ENCODE measurements at regions of chr7 and their contacts with region 1.

Region 1: DNA sequence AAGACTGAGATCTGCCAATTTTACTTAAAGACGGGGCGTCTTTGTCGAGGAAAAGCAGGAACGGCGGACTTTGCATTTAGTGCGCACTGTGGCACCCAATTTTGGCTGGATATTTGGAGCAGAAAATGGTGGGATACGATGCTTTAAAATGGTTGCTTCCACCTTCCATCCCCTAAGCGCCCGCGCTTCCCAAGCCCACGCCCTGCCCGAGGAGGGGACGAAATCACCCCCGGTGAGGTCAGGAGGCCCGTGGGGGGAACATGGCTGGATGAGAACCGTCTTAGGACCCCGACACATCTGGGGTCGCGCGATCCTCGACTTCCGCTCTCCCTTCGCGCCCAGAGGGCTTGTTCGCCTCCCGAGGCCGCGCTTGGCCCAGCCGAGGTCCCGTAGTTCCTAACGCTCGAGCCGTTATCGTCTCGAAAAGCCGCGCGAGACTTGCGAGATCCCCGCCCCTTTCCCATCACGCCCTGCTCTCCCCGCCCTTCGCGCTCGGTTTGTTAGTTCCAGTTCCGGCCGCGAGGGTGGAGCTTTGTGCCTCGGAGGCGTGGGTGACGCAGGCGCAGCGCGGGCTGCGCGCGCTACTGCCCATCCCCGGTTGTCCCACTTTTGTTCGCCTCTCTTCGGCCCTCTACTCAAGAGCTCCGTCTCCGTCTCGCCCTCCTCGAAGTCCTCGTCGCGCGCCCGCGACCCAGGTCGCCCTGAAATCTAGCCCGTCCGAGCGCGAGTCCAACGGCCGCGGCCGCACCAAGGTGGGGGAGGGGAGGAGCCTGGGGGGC is at the start of gene SRRT:
- DNase-seq: peak; percentile 98 to 99 (median 98)
- ATAC-seq: peak; percentile 95
- H3K4me3 ChIP-seq: peak within 1 kb of the TSS; percentile 96
- H3K4me3 Mint-ChIP-seq: peak within 1 kb of the TSS; percentile 100
- H3K27ac ChIP-seq: peak within 1 kb of the TSS; percentile 91
- H3K27ac Mint-ChIP-seq: peak within 1 kb of the TSS; percentile 96
- H3K4me1 ChIP-seq: peaks cover 48% of the 10 kb centered on the region
- H3K4me1 Mint-ChIP-seq: peaks cover 49% of the 10 kb centered on the region
- H3K27me3 ChIP-seq: no peaks in the 10 kb centered on the region
- H3K27me3 Mint-ChIP-seq: no peaks in the 10 kb centered on the region
- CTCF ChIP-seq: no peak
- total RNA-seq, gene SRRT: 355 to 382 TPM

Region 2: DNA sequence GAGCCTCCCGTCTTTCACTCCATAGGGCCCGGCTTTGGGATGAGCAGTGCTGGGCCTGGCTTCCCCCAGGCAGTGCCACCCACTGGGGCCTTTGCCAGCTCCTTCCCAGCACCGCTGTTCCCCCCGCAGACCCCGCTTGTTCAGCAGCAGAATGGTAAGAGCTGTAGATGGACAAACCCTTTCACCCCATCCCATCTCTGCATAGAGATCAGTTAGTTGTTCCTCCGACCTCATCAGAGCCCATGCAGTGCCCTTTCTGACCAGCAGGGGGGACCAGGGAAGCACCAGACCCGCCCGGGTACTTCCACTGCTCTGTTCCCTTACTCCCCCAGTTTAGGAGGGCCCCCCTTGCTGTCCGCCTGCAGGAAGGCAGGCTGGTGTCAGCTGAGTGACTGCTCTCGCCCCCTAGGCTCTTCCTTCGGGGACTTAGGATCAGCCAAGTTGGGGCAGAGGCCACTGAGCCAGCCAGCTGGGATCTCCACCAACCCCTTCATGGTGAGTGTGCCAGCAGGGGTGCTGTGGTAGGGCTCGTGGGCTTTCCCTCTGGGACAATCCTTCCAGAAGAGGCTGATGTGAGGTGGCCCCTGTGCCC is 310.9 kb before region 1 on chr7:
- CTCF ChIA-PET with region 1: no interaction called
- POLR2A ChIA-PET with region 1: no interaction called
- intact Hi-C with region 1: no loop called
- DNase-seq: peak; percentile 75 to 92 (median 84)
- ATAC-seq: peak; percentile 76
- H3K4me3 ChIP-seq: no peak overlapping the region
- H3K4me3 Mint-ChIP-seq: no peak overlapping the region
- H3K27ac ChIP-seq: no peak overlapping the region
- H3K27ac Mint-ChIP-seq: no peak overlapping the region
- H3K4me1 ChIP-seq: peaks cover 35% of the 10 kb centered on the region
- H3K4me1 Mint-ChIP-seq: peaks cover 34% of the 10 kb centered on the region
- H3K27me3 ChIP-seq: no peaks in the 10 kb centered on the region
- H3K27me3 Mint-ChIP-seq: no peaks in the 10 kb centered on the region
- CTCF ChIP-seq: peak; percentile 92

Region 3: DNA sequence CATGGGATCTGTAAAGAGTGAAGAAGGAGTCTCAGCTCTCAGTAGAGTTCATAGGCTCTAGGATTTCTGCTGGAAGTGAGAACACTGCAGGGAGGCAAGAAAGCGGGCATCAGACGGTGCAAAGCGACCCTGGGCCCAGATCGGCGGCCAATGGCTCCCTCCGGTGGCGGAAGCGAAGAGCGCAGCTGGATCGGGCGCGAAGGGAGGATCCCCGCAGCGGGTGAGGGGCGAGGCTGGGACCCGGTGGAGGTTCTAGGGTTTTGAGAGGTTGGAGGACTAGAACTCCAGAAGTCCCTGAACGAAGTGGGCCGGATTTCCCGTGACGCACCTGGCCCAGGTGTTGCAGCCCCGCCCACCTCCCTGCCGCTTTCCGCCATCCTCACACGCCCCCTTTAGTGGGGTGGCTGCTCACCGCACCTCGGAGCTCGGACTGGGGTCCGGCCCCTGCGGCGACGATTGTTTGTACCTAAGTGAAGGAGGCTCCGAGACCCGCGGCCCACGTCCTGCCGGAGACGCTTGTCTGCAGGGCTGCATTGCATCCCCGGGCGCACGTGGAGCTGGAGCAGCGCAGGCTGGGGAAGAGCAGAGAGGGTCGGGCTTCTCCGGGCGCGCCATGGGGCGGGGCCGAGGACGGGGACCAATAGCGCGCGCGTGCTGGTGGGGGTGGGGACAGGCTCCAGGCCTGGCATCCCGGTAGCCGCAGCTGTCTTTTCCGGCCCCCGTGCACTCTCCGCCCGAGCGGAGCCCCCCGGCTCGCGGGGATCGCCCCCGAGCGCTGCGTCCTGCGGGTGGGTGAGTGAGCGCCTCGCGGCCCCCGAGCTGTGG is 22.5 kb before region 1 on chr7 and contains the start of gene SLC12A9:
- CTCF ChIA-PET with region 1: interaction called, 13 read pairs
- POLR2A ChIA-PET with region 1: interaction called, 47 read pairs
- intact Hi-C with region 1: loop called in 1 of 2 experiments (anchors 1 kb)
- DNase-seq: peak; percentile 68 to 92 (median 82)
- ATAC-seq: peak; percentile 91
- H3K4me3 ChIP-seq: peak within 1 kb of the TSS; percentile 72
- H3K4me3 Mint-ChIP-seq: peak within 1 kb of the TSS; percentile 95
- H3K27ac ChIP-seq: peak within 1 kb of the TSS; percentile 36 to 62
- H3K27ac Mint-ChIP-seq: peak within 1 kb of the TSS; percentile 91
- H3K4me1 ChIP-seq: peaks cover 30% of the 10 kb centered on the region
- H3K4me1 Mint-ChIP-seq: peaks cover 23% of the 10 kb centered on the region
- H3K27me3 ChIP-seq: no peaks in the 10 kb centered on the region
- H3K27me3 Mint-ChIP-seq: no peaks in the 10 kb centered on the region
- CTCF ChIP-seq: peak; percentile 96
- total RNA-seq, gene SLC12A9: 26.3 to 28.2 TPM

Region 4: GRCh38 chr7:101085162-101085987 is 210.6 kb after region 1 on chr7 and contains the start of gene TRIM56:
- CTCF ChIA-PET with region 1: no interaction called
- POLR2A ChIA-PET with region 1: interaction called, 13 read pairs
- intact Hi-C with region 1: no loop called
- DNase-seq: peak; percentile 52 to 88 (median 70)
- ATAC-seq: peak; percentile 90
- H3K4me3 ChIP-seq: peak within 1 kb of the TSS; percentile 99
- H3K4me3 Mint-ChIP-seq: peak within 1 kb of the TSS; percentile 100
- H3K27ac ChIP-seq: peak within 1 kb of the TSS; percentile 91 to 92
- H3K27ac Mint-ChIP-seq: peak within 1 kb of the TSS; percentile 96
- H3K4me1 ChIP-seq: peaks cover 53% of the 10 kb centered on the region
- H3K4me1 Mint-ChIP-seq: peaks cover 28% of the 10 kb centered on the region
- H3K27me3 ChIP-seq: no peaks in the 10 kb centered on the region
- H3K27me3 Mint-ChIP-seq: no peaks in the 10 kb centered on the region
- CTCF ChIP-seq: no peak
- total RNA-seq, gene TRIM56: 29.9 to 31.8 TPM

Measured in CD4-positive, alpha-beta T cell (primary cell).